CD8-positive, alpha-beta T cell (primary cell): ENCODE measurements at regions of chr20 and their contacts with region 1.

Region 1: GRCh38 chr20:64119681-64120341 is 12.4 kb upstream of the NPBWR2 start:
- DNase-seq: peak in 3 of 9 experiments; percentile 2 to 50 (median 27)
- ATAC-seq: peak; percentile 4
- H3K4me3 ChIP-seq: peak overlapping the region; percentile 36 to 38
- H3K4me3 Mint-ChIP-seq: peak overlapping the region; percentile 72
- H3K27ac ChIP-seq: peak overlapping the region in 1 of 2 experiments; percentile 39
- H3K27ac Mint-ChIP-seq: peak overlapping the region; percentile 62
- H3K4me1 ChIP-seq: peaks cover 9% of the 10 kb centered on the region
- H3K4me1 Mint-ChIP-seq: peaks cover 8% of the 10 kb centered on the region
- H3K27me3 ChIP-seq: peaks cover 0 to 3% of the 10 kb centered on the region in 2 experiments
- H3K27me3 Mint-ChIP-seq: peaks cover 4% of the 10 kb centered on the region
- CTCF ChIP-seq: no peak

Region 2: DNA sequence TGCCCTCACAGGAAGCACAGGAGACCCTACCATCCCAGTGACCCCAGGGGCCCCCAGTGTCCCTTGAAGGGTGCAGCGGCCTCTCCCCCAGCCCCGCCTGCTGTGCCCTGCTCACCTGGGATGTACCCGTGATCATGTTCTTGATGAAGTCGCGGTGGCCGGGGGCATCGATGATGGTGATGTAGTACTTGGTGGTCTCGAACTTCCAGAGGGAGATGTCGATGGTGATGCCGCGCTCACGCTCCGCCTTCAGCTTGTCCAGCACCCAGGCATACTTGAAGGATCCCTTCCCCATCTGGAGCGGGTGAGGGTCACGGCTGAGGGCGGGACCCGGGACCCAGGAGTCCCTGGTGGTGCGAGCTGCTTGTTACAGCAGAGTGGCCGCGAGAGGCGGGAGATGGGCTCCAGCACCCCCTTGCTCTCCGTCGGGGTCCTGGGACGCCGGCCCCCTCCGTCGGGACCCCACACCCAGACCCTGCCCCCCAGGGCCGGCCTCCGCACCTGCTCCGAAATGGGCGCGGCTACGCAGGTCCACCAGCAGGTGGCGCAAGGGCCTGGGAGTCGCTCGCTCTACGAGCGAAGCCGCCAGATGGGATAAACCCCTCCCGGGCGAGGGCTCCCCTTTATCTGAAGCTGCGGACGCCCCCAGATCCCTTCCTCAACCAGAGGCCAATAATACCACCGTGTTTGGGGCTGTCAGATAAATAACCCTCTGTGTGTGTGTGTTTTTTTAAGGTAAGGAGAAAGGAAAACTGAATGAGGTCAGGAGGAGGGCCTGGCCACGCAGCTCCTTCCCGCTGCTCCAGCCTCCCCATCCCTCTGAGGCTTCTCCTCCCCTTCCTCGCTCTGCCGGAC is 623.8 kb before region 1 on chr20:
- CTCF ChIA-PET with region 1: interaction called, 4 read pairs
- POLR2A ChIA-PET with region 1: no interaction called
- intact Hi-C with region 1: loop called in 1 of 2 experiments (anchors 1 kb)
- DNase-seq: peak; percentile 48 to 86 (median 78)
- ATAC-seq: peak; percentile 74
- H3K4me3 ChIP-seq: peak overlapping the region; percentile 15 to 18
- H3K4me3 Mint-ChIP-seq: peak overlapping the region; percentile 39
- H3K27ac ChIP-seq: no peak overlapping the region
- H3K27ac Mint-ChIP-seq: no peak overlapping the region
- H3K4me1 ChIP-seq: peaks cover 16% of the 10 kb centered on the region
- H3K4me1 Mint-ChIP-seq: peaks cover 5% of the 10 kb centered on the region
- H3K27me3 ChIP-seq: peaks cover 9 to 33% of the 10 kb centered on the region in 2 experiments
- H3K27me3 Mint-ChIP-seq: peaks cover 10% of the 10 kb centered on the region
- CTCF ChIP-seq: peak; percentile 95

Region 3: GRCh38 chr20:63808964-63809674 is 310.7 kb before region 1 on chr20:
- CTCF ChIA-PET with region 1: no interaction called
- POLR2A ChIA-PET with region 1: no interaction called
- intact Hi-C with region 1: no loop called
- DNase-seq: no peak
- ATAC-seq: no peak
- H3K4me3 ChIP-seq: no peak overlapping the region
- H3K4me3 Mint-ChIP-seq: no peak overlapping the region
- H3K27ac ChIP-seq: no peak overlapping the region
- H3K27ac Mint-ChIP-seq: no peak overlapping the region
- H3K4me1 ChIP-seq: no peaks in the 10 kb centered on the region
- H3K4me1 Mint-ChIP-seq: no peaks in the 10 kb centered on the region
- H3K27me3 ChIP-seq: peaks cover 0 to 3% of the 10 kb centered on the region in 2 experiments
- H3K27me3 Mint-ChIP-seq: peaks cover 15% of the 10 kb centered on the region
- CTCF ChIP-seq: no peak

Region 4: GRCh38 chr20:63911176-63911575 is 208.6 kb before region 1 on chr20:
- CTCF ChIA-PET with region 1: interaction called, 4 read pairs
- POLR2A ChIA-PET with region 1: no interaction called
- intact Hi-C with region 1: loop called (anchors 1 to 5 kb)
- DNase-seq: no peak
- ATAC-seq: no peak
- H3K4me3 ChIP-seq: no peak overlapping the region
- H3K4me3 Mint-ChIP-seq: no peak overlapping the region
- H3K27ac ChIP-seq: no peak overlapping the region
- H3K27ac Mint-ChIP-seq: peak overlapping the region; percentile 46
- H3K4me1 ChIP-seq: peaks cover 13% of the 10 kb centered on the region
- H3K4me1 Mint-ChIP-seq: peaks cover 45% of the 10 kb centered on the region
- H3K27me3 ChIP-seq: no peaks in the 10 kb centered on the region
- H3K27me3 Mint-ChIP-seq: no peaks in the 10 kb centered on the region
- CTCF ChIP-seq: no peak

Region 5: DNA sequence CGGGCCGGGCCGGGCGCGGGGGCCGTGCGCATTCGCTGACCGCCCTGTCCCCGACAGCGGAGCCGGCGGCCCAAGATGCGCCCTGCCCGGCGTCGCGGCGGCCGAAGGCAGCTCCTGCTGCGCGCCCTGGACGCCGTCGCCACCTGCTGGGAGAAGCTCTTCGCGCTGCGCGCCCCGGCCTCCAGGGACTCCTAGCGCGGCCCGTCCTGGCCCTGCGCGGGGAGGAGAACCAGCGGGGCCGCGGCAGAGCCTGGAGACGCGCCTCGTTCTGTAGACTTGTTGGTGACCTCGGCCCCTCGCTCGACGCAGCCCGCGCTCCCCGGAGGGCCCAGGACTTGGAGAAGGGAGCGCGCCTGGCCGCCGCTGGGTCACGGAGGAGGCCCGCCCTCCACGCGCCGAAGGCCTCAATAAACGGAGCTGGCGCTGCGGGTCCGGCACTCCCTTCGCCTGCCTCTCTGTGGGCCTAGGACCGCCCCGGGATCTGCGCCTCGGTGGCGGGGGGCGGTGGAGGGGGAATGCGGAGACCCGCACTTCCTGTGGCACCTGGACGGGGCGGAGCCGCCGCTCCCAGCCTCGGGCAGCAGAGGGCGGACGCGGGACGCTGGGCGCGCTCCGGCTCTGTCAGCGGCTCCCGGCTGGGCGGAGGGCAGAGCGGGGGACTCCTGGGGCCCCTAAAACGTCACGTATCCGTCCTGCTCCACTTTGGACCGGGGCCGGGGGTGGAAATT is 81.1 kb before region 1 on chr20:
- CTCF ChIA-PET with region 1: interaction called, 63 read pairs
- POLR2A ChIA-PET with region 1: interaction called, 10 read pairs
- intact Hi-C with region 1: loop called in 1 of 2 experiments (anchors 1 kb)
- DNase-seq: peak; percentile 57 to 91 (median 78)
- ATAC-seq: peak; percentile 78
- H3K4me3 ChIP-seq: peak overlapping the region; percentile 45 to 76
- H3K4me3 Mint-ChIP-seq: peak overlapping the region; percentile 78
- H3K27ac ChIP-seq: peak overlapping the region in 1 of 2 experiments; percentile 45
- H3K27ac Mint-ChIP-seq: no peak overlapping the region
- H3K4me1 ChIP-seq: peaks cover 75% of the 10 kb centered on the region
- H3K4me1 Mint-ChIP-seq: peaks cover 39% of the 10 kb centered on the region
- H3K27me3 ChIP-seq: peaks cover 0 to 3% of the 10 kb centered on the region in 2 experiments
- H3K27me3 Mint-ChIP-seq: no peaks in the 10 kb centered on the region
- CTCF ChIP-seq: peak; percentile 67

Region 6: GRCh38 chr20:64101731-64102621 is 17.8 kb before region 1 on chr20:
- CTCF ChIA-PET with region 1: interaction called, 10 read pairs
- POLR2A ChIA-PET with region 1: no interaction called
- intact Hi-C with region 1: loop called (anchors 1 kb)
- DNase-seq: peak; percentile 42 to 81 (median 69)
- ATAC-seq: peak; percentile 63
- H3K4me3 ChIP-seq: peak overlapping the region; percentile 8 to 39
- H3K4me3 Mint-ChIP-seq: peak overlapping the region; percentile 26
- H3K27ac ChIP-seq: no peak overlapping the region
- H3K27ac Mint-ChIP-seq: no peak overlapping the region
- H3K4me1 ChIP-seq: peaks cover 16% of the 10 kb centered on the region
- H3K4me1 Mint-ChIP-seq: peaks cover 23% of the 10 kb centered on the region
- H3K27me3 ChIP-seq: peaks cover 6 to 8% of the 10 kb centered on the region in 2 experiments
- H3K27me3 Mint-ChIP-seq: peaks cover 14% of the 10 kb centered on the region
- CTCF ChIP-seq: peak; percentile 85